ENCODE measurements at regions of chrX and their contacts with region 1.

Region 1: GRCh38 chrX:9708904-9709553 is 56.6 kb downstream of the GPR143 start:
- DNase-seq: peak; percentile 75
- H3K4me3 ChIP-seq: no peak overlapping the region
- H3K27ac ChIP-seq: no peak overlapping the region
- H3K4me1 ChIP-seq: no peaks in the 10 kb centered on the region
- H3K27me3 ChIP-seq: no peaks in the 10 kb centered on the region
- CTCF ChIP-seq: peak; percentile 88

Region 2: DNA sequence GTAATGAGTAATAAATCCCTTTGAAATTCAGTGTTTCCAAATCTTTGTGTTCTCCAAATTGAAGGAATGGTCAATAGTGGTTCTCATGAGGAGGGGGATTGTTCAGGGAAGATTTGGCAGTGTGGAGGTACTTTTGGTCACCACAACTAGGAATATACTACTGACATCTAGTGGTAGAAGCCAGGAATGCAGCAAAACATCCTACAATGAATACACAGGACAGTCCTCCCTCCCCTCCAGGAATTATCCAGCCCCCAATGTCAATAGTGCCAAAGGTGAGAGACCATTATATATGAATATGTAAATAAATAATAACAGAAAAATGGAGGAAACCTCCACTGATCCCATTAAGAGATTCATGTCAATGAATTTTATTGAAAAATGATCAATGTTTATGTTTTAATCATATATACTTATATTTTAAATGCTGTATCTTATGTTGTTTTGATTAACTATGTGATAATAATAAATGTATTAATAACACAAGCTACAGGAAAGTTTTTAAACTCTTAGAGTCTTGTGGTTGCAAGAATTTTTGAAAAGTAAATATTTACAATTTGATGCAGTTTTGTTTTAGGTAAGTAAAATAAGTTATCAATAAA is 893.5 kb before region 1 on chrX:
- CTCF ChIA-PET with region 1: no interaction called
- POLR2A ChIA-PET with region 1: no interaction called
- intact Hi-C with region 1: loop called (anchors 2 kb)
- DNase-seq: peak; percentile 64
- H3K4me3 ChIP-seq: no peak overlapping the region
- H3K27ac ChIP-seq: no peak overlapping the region
- H3K4me1 ChIP-seq: no peaks in the 10 kb centered on the region
- H3K27me3 ChIP-seq: no peaks in the 10 kb centered on the region
- CTCF ChIP-seq: peak; percentile 78

Region 3: GRCh38 chrX:8971116-8971515 is 737.9 kb before region 1 on chrX:
- CTCF ChIA-PET with region 1: no interaction called
- POLR2A ChIA-PET with region 1: no interaction called
- intact Hi-C with region 1: loop called (anchors 1 kb)
- DNase-seq: peak; percentile 60
- H3K4me3 ChIP-seq: no peak overlapping the region
- H3K27ac ChIP-seq: no peak overlapping the region
- H3K4me1 ChIP-seq: no peaks in the 10 kb centered on the region
- H3K27me3 ChIP-seq: no peaks in the 10 kb centered on the region
- CTCF ChIP-seq: peak; percentile 52; the same call in 1 of the 2 replicates

Region 4: GRCh38 chrX:9341291-9342201 is 367.5 kb before region 1 on chrX:
- CTCF ChIA-PET with region 1: no interaction called
- POLR2A ChIA-PET with region 1: no interaction called
- intact Hi-C with region 1: loop called (anchors 10 kb)
- DNase-seq: peak; percentile 89
- H3K4me3 ChIP-seq: peak overlapping the region; percentile 23
- H3K27ac ChIP-seq: peak overlapping the region; percentile 80
- H3K4me1 ChIP-seq: peaks cover 26% of the 10 kb centered on the region
- H3K27me3 ChIP-seq: no peaks in the 10 kb centered on the region
- CTCF ChIP-seq: no peak; the same call in 1 of the 2 replicates

Measured in A673 (cell line).